ENCODE measurements at regions of chr1 and their contacts with region 1.

Region 1: DNA sequence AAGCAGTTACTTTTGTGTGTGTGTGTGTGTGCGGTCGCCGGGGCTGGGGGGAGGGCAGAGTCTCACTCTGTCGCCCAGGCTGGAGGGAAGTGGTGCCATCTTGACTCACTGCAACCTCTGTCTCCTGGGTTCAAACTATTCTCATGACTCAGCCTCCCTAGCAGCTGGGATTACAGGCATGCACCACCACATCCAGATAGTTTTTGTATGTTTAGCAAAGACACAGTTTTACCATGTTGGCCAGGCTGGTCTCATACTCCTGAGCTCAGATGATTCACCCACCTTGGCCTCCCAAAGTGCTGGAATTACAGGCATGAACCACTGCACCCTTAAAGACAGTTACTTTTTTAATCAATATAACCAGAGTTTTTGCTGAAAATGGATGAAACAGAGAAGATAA is 207.0 kb downstream of the PTPRC start:
- H3K4me3 ChIP-seq: no peak overlapping the region
- H3K27ac ChIP-seq: no peak overlapping the region
- H3K4me1 ChIP-seq: peaks cover 13% of the 10 kb centered on the region
- CTCF ChIP-seq: no peak

Region 2: DNA sequence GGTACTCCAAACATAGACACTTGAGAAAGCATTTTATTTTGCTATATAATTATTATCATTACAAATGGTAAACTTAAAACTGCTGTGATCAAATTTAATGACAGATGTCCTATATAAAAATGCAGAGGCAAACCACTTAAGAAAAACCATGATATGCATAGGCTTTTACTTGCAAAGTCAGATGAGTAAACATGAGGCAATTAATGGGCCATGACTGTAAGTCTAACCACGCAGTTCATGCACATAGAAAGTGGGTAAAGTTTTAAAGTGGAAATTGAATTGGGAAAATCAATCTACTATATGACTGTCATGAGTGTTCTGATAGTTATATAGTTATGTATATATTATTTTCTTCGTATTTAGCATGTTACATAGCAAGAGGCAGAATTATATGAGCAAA is 12.2 kb after region 1 on chr1:
- CTCF ChIA-PET with region 1: no interaction called
- POLR2A ChIA-PET with region 1: no interaction called
- H3K4me3 ChIP-seq: no peak overlapping the region
- H3K27ac ChIP-seq: no peak overlapping the region
- H3K4me1 ChIP-seq: 0 out of 2 replicates have a peak, but pooled peaks cover 3% of the 10 kb centered on the region
- CTCF ChIP-seq: no peak

Region 3: DNA sequence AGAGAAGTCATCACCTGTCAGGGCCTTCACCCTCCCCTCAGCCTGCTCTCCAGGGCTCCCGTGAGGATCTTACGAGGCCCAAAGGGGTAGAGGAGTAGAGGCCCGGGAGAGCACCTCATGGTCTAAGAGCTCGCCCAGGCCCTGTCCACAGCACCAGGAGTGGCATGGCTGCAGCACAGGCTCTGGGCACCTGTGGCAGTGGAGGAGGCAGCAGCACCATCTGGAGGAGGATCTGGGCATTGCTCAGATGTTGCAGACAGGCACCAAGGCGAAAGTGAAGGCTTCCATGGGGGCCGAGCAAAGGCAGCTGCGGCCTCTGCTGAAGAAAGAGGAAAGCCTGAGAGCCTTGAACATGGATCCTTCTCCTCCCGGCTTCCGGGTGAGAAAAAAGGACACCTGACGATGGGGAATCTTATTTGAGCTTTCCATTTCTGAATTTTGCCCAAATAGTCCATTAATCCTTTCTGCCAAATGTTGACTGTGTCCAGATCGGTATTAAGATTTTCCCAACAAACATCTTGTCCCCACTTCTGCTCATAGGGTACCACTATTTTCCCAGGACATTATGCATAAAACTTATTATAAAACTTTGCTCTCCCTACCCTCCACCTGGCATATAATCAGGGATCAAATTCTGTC is 397.7 kb after region 1 on chr1:
- CTCF ChIA-PET with region 1: interaction called, 10 read pairs
- POLR2A ChIA-PET with region 1: no interaction called
- H3K4me3 ChIP-seq: no peak overlapping the region
- H3K27ac ChIP-seq: no peak overlapping the region
- H3K4me1 ChIP-seq: no peaks in the 10 kb centered on the region
- CTCF ChIP-seq: peak; percentile 68

Measured in HEK293 (cell line).